PC-9 (cell line): ENCODE measurements at regions of chr22 and their contacts with region 1.

Region 1: DNA sequence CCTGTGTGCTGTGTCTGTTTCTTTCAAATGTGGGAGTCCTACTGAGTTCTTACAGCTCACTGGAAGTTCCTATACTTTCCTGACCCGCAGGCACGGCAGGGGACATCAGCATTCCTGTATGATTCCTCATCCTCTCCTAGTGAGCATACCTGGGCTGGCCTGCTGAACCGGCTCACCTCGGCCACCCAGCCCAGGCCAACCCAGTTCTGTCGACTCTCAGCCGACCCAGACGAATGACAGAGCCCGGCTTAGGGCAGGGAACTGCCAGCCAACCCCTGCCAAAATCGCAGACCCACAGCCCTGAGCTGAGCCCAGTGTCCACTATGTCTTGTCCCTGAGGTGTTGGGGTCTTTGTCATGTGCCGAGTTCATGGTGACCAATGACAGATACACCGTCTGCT is 339.7 kb downstream of the BRD1 start:
- DNase-seq: peak; percentile 86 to 94
- H3K4me3 ChIP-seq: no peak overlapping the region; the same call in 1 of the 2 replicates
- H3K27ac ChIP-seq: peak overlapping the region; percentile 71
- H3K4me1 ChIP-seq: peaks cover 37% of the 10 kb centered on the region
- H3K27me3 ChIP-seq: no peaks in the 10 kb centered on the region
- CTCF ChIP-seq: no peak

Region 2: GRCh38 chr22:49404576-49405241 is 83.2 kb before region 1 on chr22:
- CTCF ChIA-PET with region 1: no interaction called
- POLR2A ChIA-PET with region 1: no interaction called
- intact Hi-C with region 1: no loop called
- DNase-seq: no peak
- H3K4me3 ChIP-seq: no peak overlapping the region
- H3K27ac ChIP-seq: no peak overlapping the region
- H3K4me1 ChIP-seq: no peaks in the 10 kb centered on the region
- H3K27me3 ChIP-seq: peaks cover 100% of the 10 kb centered on the region
- CTCF ChIP-seq: no peak

Region 3: GRCh38 chr22:49502126-49502826 is 14.3 kb after region 1 on chr22:
- CTCF ChIA-PET with region 1: no interaction called
- POLR2A ChIA-PET with region 1: no interaction called
- intact Hi-C with region 1: loop called (anchors 1 kb)
- DNase-seq: peak; percentile 62 to 86
- H3K4me3 ChIP-seq: peak overlapping the region; percentile 42; the same call in 1 of the 2 replicates
- H3K27ac ChIP-seq: peak overlapping the region; percentile 87
- H3K4me1 ChIP-seq: peaks cover 42% of the 10 kb centered on the region
- H3K27me3 ChIP-seq: no peaks in the 10 kb centered on the region
- CTCF ChIP-seq: no peak

Region 4: DNA sequence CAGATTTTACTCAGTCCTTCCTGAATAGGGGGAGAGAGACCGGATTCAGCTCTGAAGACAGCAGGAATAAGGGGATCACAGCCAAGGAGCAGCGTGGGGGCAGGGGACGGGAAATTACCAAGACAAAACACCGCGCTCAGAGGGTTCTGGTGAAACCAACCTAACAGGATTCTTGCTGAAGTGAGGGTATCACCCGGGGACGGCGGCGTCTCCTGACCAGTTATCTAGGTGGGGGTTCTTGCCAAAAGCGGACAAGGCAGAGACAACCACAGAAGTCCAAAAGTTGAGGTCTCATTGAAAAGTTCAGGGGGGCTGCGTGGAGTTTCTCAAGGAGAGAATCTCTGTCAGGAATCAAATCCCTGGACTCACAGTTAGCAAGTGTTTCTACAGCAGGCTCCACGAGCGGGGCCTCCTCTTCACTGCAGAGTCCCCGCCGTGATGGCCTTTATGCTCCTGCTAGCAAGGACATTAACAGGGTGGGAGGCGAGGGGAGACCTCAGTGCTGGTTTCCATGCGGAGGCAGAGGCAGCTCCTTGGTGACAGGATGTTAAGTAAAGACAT is 48.7 kb after region 1 on chr22:
- CTCF ChIA-PET with region 1: no interaction called
- POLR2A ChIA-PET with region 1: no interaction called
- intact Hi-C with region 1: loop called (anchors 5 kb)
- DNase-seq: no peak
- H3K4me3 ChIP-seq: no peak overlapping the region
- H3K27ac ChIP-seq: no peak overlapping the region
- H3K4me1 ChIP-seq: no peaks in the 10 kb centered on the region
- H3K27me3 ChIP-seq: peaks cover 97% of the 10 kb centered on the region
- CTCF ChIP-seq: no peak